Left cardiac atrium (tissue), 4 donors: ENCODE measurements at regions of chr22 and their contacts with region 1.

Region 1: DNA sequence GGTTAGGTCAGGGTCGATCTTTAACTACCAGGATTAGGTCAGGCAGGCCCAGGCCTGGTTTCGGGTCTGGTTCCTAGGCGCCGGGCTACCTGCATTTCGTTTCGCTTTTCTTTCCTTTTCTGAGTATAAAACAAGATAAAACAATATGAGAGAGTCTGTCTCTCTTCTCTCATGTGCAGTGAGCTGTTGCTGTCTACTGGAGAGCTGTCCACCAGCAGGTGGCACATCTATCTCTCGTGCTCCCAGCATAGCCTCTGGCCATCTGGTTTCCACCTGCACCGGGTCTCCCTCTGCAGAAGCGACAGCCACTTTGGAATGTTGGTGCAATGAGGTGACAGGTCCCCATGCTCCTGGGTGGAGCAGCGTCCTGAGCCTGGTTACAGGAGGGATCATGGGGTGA is 27.6 kb downstream of the RIBC2 start:
- DNase-seq: peak; percentile 59
- ATAC-seq: peak; percentile 88 to 91

Region 2: DNA sequence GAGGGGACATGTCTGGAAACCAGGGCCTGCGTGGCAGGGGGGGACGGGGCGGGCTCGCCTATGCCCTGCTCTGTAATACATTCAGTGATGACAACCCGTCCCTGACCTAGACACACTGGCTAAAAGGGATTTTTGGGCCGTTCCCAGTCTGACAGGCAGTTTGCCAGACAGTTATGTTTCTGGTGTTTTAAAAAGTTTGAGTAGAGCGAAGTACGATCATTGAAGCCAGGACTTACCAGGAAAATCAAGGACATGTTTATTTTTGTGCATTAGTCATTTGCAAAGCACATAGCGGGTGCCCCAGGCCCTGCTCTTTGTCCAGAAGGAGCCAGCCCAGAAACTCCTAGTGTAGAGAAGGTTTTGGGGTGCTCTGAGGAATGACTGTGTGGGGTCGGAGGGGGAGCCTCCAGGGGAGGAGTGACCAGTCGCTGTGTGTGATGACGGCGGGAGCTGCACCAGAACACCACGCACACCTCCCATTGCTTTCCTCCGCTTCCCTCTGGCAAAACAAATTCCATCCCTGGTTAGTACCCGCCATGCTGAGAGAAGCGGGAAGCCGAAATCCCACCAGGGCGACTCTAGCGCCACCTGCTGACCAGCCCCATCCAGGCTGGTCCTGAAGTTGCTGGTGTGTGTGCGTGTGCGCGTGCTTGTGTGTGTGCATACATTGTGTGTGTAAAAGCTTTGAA is 112.4 kb after region 1 on chr22:
- intact Hi-C with region 1: loop called (anchors 1 to 5 kb)
- DNase-seq: peak; percentile 83
- ATAC-seq: peak; percentile 46 to 59